Astrocyte of the cerebellum (primary cell): ENCODE measurements at regions of chrX and their contacts with region 1.

Region 1: GRCh38 chrX:1657367-1658070 is 42.7 kb downstream of the ASMT start:
- DNase-seq: no peak
- H3K4me3 ChIP-seq: no peak overlapping the region
- CTCF ChIP-seq: no peak

Region 2: GRCh38 chrX:2577844-2578506 is 920.5 kb after region 1 on chrX:
- in situ Hi-C with region 1: loop called (anchors 25 kb)
- DNase-seq: peak; percentile 62
- H3K4me3 ChIP-seq: no peak overlapping the region
- CTCF ChIP-seq: no peak